ENCODE measurements at regions of chr17 and their contacts with region 1.

Region 1: GRCh38 chr17:50626037-50626574 is 8.6 kb upstream of the ABCC3 start:
- DNase-seq: peak; percentile 58
- ATAC-seq: peak; percentile 81
- H3K4me3 ChIP-seq: no peak overlapping the region
- H3K27ac ChIP-seq: peak overlapping the region; percentile 9; the same call in 1 of the 2 replicates
- H3K4me1 ChIP-seq: peaks cover 9 to 32% of the 10 kb centered on the region in 2 experiments; a peak in 3 of 4 replicates
- H3K27me3 ChIP-seq: no peaks in the 10 kb centered on the region
- CTCF ChIP-seq: peak; percentile 90 to 96 (median 92)
- POLR2A ChIP-seq: no peak
- RAD21 ChIP-seq: peak; percentile 92

Region 2: GRCh38 chr17:50638851-50639767 is 13.0 kb after region 1 on chr17:
- CTCF ChIA-PET with region 1: interaction called, 38 read pairs
- POLR2A ChIA-PET with region 1: interaction called, 25 read pairs
- RAD21 ChIA-PET with region 1: interaction called, 5 to 7 read pairs
- intact Hi-C with region 1: no loop called
- DNase-seq: peak; percentile 99
- ATAC-seq: peak; percentile 74
- H3K4me3 ChIP-seq: peak overlapping the region; percentile 19 to 43
- H3K27ac ChIP-seq: peak overlapping the region; percentile 95
- H3K4me1 ChIP-seq: peaks cover 82 to 93% of the 10 kb centered on the region in 2 experiments
- H3K27me3 ChIP-seq: no peaks in the 10 kb centered on the region
- CTCF ChIP-seq: no peak
- POLR2A ChIP-seq: peak; percentile 14
- RAD21 ChIP-seq: no peak

Region 3: DNA sequence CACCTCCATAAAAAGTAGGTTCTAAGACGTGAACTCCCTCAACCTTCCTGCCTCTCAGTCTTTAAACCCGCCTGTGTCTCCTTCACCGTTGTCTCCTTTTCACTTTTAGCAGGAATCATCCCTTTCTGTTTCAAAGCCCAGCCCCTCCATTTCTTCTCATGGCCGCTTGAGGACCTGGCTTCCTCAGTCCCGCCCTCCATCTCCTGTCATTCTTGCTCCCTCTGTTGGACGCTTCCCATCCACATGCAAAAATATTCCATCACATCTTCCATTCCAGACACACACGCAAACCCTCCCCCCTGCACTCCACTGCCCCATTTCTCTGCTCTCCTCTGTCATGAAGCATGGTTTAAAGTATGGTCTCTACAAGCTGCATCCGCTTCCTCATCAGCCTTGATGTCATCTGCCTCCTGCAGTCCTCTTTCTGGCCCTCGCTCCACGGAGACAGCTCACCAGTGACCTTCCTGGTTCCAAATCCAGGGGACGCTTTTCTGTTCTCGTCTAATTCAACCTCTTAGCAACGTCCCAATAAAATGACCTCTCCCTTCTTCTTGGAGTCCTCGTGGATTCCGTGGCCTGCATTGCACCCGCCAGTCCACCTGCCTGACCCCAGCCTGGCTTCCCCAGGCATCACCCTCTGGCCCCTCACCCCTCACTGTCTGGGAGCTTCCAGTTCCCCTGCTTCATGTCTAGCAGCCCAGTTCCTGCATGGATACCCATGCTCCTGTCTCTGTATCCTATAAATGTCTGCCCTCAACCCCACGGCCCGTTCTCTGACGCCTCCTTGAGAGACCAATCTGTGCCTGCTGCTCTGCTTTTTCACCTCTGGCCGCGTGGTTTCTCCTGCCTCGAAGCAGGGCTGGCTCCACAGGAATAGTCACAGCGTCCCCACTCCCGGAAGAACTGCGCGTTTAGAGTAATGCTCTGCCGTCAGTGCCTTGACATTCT is 55.4 kb after region 1 on chr17:
- CTCF ChIA-PET with region 1: interaction called, 13 read pairs
- POLR2A ChIA-PET with region 1: interaction called, 6 read pairs
- RAD21 ChIA-PET with region 1: interaction called, 3 to 7 read pairs
- intact Hi-C with region 1: loop called (anchors 1 kb)
- DNase-seq: peak; percentile 73
- ATAC-seq: peak; percentile 71
- H3K4me3 ChIP-seq: no peak overlapping the region
- H3K27ac ChIP-seq: peak overlapping the region; percentile 29; the same call in 1 of the 2 replicates
- H3K4me1 ChIP-seq: peaks cover 50 to 72% of the 10 kb centered on the region in 2 experiments
- H3K27me3 ChIP-seq: no peaks in the 10 kb centered on the region
- CTCF ChIP-seq: peak; percentile 77 to 99 (median 80)
- POLR2A ChIP-seq: no peak
- RAD21 ChIP-seq: peak; percentile 99

Region 4: DNA sequence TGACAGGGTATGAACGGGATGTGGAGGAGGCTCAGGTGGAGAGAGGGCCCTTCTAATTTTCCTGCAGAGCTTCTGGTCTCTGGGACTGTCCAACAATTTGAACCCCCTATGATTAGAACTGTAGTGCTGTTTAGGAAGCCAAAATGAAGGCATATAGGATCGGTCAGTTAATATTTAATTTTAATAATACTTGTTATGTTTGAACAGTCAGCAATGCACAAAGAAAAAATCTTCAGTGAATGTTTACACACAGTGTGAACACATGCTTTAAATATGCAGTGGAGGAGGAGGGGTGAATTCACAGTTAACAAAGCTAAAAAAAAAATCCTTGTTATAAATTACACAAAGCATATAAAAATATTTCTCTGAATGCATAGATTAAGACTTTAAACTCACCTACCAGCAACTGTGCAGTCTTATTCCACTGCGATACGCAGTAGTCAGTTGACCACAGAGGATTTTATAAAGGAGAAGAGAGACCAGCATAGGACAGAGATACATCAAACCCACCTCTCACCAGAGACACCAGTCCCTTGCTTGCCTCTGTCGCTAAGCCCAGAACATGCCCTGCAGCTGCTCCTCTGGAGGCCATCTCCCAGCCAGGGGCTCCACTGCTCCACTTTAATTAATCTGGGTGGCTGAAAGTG is 67.1 kb after region 1 on chr17:
- CTCF ChIA-PET with region 1: interaction called, 107 read pairs
- POLR2A ChIA-PET with region 1: interaction called, 9 read pairs
- RAD21 ChIA-PET with region 1: interaction called, 7 to 10 read pairs
- intact Hi-C with region 1: loop called (anchors 1 kb)
- DNase-seq: no peak
- ATAC-seq: no peak
- H3K4me3 ChIP-seq: no peak overlapping the region
- H3K27ac ChIP-seq: no peak overlapping the region
- H3K4me1 ChIP-seq: peaks cover 45 to 65% of the 10 kb centered on the region in 2 experiments
- H3K27me3 ChIP-seq: no peaks in the 10 kb centered on the region
- CTCF ChIP-seq: no peak
- POLR2A ChIP-seq: no peak
- RAD21 ChIP-seq: no peak

Region 5: GRCh38 chr17:51107778-51108177 is 481.7 kb after region 1 on chr17:
- CTCF ChIA-PET with region 1: no interaction called
- POLR2A ChIA-PET with region 1: no interaction called
- RAD21 ChIA-PET with region 1: no interaction called
- intact Hi-C with region 1: no loop called
- DNase-seq: no peak
- ATAC-seq: no peak
- H3K4me3 ChIP-seq: no peak overlapping the region
- H3K27ac ChIP-seq: no peak overlapping the region
- H3K4me1 ChIP-seq: no peaks in the 10 kb centered on the region
- H3K27me3 ChIP-seq: no peaks in the 10 kb centered on the region
- CTCF ChIP-seq: no peak
- POLR2A ChIP-seq: no peak
- RAD21 ChIP-seq: no peak